A673 (cell line): ENCODE measurements at regions of chr10 and their contacts with region 1.

Region 1: GRCh38 chr10:920450-920849 is 11.1 kb downstream of the LARP4B start:
- DNase-seq: no peak
- H3K4me3 ChIP-seq: no peak overlapping the region
- H3K27ac ChIP-seq: no peak overlapping the region
- H3K4me1 ChIP-seq: no peaks in the 10 kb centered on the region
- H3K27me3 ChIP-seq: no peaks in the 10 kb centered on the region
- CTCF ChIP-seq: no peak

Region 2: DNA sequence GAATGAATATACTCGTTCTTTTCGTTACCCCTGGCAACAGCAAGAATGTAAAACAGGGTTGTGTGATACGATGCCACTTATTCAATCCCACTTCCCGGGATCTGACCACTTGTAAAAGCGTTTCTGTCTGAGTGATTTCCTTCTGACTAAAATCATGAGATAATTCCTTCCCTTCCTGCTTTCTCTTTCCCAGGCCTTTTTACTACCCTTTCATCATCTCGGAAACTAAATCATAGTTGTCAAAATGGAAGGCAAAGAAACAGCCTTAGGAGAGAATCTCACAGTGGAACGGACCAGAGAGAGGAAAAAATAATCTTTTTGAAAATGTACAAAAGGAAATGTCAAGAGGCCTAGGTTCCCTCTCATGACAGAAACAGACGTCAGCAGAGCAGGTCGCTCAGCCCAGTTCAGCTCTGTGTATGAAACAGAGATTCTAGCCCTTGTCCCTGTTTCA is 260.7 kb before region 1 on chr10:
- CTCF ChIA-PET with region 1: no interaction called
- POLR2A ChIA-PET with region 1: no interaction called
- intact Hi-C with region 1: no loop called
- DNase-seq: peak; percentile 21
- H3K4me3 ChIP-seq: no peak overlapping the region
- H3K27ac ChIP-seq: peak overlapping the region; percentile 61
- H3K4me1 ChIP-seq: peaks cover 20% of the 10 kb centered on the region
- H3K27me3 ChIP-seq: no peaks in the 10 kb centered on the region
- CTCF ChIP-seq: no peak

Region 3: DNA sequence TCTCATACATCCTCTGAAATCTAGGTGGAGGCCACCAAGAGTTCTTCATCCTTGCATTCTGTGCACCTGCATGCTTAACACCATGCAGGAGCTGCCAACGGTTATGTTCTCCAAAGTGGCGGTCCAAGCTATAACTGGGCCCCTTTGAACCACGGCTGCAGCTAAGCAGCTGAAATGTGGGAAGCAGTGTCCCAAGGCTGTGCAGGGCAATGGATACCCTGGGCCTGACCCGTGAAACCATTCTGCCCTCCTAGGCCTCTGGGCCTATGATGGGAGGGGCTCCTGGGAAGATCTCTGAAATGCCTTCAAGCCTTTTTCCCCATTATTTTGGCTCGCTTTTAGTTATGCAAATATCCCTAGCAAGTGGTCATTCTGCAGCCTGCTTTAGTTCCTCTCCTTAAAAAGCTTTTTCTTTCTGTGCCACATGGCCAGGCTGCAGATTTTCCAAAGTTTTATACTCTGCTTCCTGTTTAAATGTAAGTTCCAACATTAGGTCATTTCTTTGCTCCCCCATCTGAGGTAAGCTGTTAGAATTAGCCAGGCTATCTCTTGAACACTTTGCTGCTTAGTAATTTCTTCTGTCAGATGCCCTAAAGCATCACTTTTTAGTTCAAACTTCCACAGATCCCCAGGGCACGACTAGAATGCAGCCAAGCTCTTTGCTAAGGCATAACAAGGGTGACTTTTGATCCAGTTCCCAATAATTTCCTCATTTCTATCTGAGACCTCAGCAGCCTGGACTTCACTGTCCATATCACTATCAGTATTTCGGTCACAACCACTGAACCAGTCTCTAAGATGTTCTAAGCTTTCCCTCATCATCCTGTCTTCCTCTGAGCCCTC is 60.2 kb after region 1 on chr10:
- CTCF ChIA-PET with region 1: interaction called, 16 read pairs
- POLR2A ChIA-PET with region 1: no interaction called
- intact Hi-C with region 1: no loop called
- DNase-seq: no peak
- H3K4me3 ChIP-seq: no peak overlapping the region
- H3K27ac ChIP-seq: no peak overlapping the region
- H3K4me1 ChIP-seq: no peaks in the 10 kb centered on the region
- H3K27me3 ChIP-seq: no peaks in the 10 kb centered on the region
- CTCF ChIP-seq: no peak